ENCODE measurements at regions of chr11 and their contacts with region 1.

Region 1: DNA sequence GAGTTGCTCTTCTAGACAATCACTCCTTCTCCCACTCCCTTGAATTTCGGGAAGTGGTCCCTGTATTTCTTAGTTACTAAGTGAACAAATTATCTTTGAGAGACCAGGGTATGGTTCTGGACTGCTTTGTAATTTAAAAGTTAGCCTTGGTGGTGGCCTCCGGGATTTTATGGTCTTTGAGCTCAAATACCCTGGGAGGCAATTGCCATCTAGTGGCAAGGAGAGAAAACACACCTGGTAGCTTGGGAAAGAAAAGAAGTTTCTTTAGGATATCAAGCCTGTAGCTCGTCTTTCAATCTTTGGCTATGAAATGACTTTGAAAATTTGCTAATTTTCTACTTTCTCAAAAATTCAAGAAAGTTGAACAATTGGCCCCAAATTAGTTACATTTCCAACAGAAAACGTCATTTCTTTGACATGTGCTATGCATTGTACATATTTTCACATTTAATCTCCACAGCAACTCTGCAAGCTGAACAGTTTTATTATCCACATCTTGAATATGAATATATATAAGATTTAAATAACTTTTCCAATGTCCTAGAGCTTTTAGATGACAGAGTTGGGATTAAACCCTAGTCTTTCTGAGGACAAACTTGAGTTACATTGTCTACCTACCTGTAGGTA is 39.1 kb downstream of the MMP27 start:
- DNase-seq: peak; percentile 79
- ATAC-seq: peak; percentile 67
- H3K4me3 ChIP-seq: no peak overlapping the region
- H3K27ac ChIP-seq: no peak overlapping the region
- H3K4me1 ChIP-seq: no peaks in the 10 kb centered on the region
- H3K27me3 ChIP-seq: no peaks in the 10 kb centered on the region
- CTCF ChIP-seq: peak; percentile 97

Region 2: GRCh38 chr11:102341844-102342318 is 324.6 kb before region 1 on chr11:
- CTCF ChIA-PET with region 1: interaction called, 4 read pairs
- POLR2A ChIA-PET with region 1: no interaction called
- intact Hi-C with region 1: loop called (anchors 2 kb)
- DNase-seq: peak; percentile 93
- ATAC-seq: peak; percentile 52
- H3K4me3 ChIP-seq: no peak overlapping the region
- H3K27ac ChIP-seq: no peak overlapping the region
- H3K4me1 ChIP-seq: peaks cover 21% of the 10 kb centered on the region
- H3K27me3 ChIP-seq: no peaks in the 10 kb centered on the region
- CTCF ChIP-seq: peak; percentile 96

Region 3: GRCh38 chr11:102367364-102367763 is 299.1 kb before region 1 on chr11:
- CTCF ChIA-PET with region 1: interaction called, 3 read pairs
- POLR2A ChIA-PET with region 1: no interaction called
- intact Hi-C with region 1: loop called (anchors 2 kb)
- DNase-seq: peak; percentile 59
- ATAC-seq: peak; percentile 37; the same call in 1 of the 2 replicates
- H3K4me3 ChIP-seq: no peak overlapping the region
- H3K27ac ChIP-seq: no peak overlapping the region
- H3K4me1 ChIP-seq: no peaks in the 10 kb centered on the region
- H3K27me3 ChIP-seq: no peaks in the 10 kb centered on the region
- CTCF ChIP-seq: peak; percentile 64

Region 4: GRCh38 chr11:102810945-102811660 is 144.7 kb after region 1 on chr11:
- CTCF ChIA-PET with region 1: no interaction called
- POLR2A ChIA-PET with region 1: no interaction called
- intact Hi-C with region 1: no loop called
- DNase-seq: peak; percentile 69
- ATAC-seq: peak; percentile 86
- H3K4me3 ChIP-seq: no peak overlapping the region
- H3K27ac ChIP-seq: no peak overlapping the region
- H3K4me1 ChIP-seq: 0 out of 2 replicates have a peak, but pooled peaks cover 5% of the 10 kb centered on the region
- H3K27me3 ChIP-seq: no peaks in the 10 kb centered on the region
- CTCF ChIP-seq: peak; percentile 88

Measured in PC-3 (cell line).